Tibial artery (tissue), 4 donors: ENCODE measurements at regions of chr4 and their contacts with region 1.

Region 1: DNA sequence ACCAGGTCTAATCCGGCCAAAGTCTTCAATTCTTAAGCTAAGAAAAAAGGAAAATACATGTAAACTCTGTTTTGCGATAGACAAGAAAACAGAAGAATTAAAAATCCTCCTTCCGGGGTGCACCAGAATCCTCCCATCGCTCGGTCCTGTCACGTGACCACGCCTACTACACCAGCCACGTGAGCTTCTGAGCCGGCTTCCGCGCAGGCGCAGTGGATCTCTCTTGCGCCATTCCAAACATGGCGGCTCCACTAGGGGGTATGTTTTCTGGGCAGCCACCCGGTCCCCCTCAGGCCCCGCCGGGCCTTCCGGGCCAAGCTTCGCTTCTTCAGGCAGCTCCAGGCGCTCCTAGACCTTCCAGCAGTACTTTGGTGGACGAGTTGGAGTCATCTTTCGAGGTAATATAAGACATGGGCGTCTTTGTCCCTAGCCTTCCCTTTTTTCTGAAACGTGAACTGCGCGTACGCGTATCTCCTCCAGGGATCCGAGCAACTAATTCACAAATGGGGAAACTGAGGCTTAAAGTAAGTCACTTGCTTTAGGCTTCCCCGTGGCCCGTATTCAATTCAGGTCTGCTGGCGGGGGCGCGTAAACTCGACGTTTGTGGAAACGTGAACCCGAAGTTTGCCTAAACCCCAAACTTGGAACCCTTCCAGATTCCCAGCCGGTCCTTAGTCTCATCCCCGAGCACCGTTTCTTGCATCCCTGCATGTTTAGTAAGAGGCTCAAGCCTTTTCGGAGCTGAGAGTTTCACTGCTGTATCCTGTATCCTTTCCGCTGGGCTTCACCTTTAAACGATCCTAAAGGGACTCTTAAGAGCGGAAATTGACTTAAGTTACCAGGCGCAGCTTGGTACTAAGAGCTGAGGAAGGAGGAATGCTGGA is at the start of gene MED28:
- DNase-seq: peak; percentile 97 to 98
- H3K4me3 ChIP-seq: peak within 1 kb of the TSS; percentile 79 to 87
- H3K27ac ChIP-seq: peak within 1 kb of the TSS; percentile 82 to 88
- H3K4me1 ChIP-seq: peaks cover 0 to 49% (median 34%) of the 10 kb centered on the region in 4 donors
- H3K27me3 ChIP-seq: no peaks in the 10 kb centered on the region
- CTCF ChIP-seq: peak in 1 of 2 experiments; percentile 36

Region 2: DNA sequence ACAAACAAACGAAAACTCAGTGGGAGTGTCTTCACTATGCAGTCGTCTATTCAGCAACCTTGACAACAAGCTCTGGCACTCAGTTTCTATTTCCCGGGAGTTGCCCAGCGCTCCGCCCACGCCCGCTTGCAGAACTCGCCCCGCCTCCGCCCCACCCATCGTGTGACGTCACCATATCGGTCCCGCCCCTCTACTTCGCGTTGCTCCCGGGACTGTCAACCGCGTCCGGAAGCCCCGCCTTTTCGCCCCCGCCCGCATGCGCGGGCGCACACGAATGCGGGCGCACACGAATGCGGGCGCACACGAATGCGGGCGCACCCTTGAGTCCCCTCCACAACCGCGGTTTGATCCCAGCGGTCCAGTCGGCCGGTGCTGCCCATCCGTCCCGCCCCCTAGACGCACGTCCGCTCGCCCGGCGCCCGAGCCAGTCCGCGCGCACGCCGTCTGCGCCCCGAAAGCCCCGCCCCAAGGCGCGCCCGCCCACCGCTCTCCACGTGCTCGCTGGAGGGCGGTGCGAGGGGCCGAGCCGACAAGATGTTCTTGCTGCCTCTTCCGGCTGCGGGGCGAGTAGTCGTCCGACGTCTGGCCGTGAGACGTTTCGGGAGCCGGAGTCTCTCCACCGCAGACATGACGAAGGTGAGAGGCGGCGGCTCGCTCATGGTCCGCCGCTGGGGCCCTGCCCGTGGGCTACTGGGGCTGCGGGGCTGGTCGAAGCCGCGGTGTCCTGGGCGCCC is 37.6 kb before region 1 on chr4 and contains the start of gene LAP3:
- intact Hi-C with region 1: loop called (anchors 5 kb)
- DNase-seq: peak; percentile 96 to 98
- H3K4me3 ChIP-seq: peak within 1 kb of the TSS; percentile 74 to 85
- H3K27ac ChIP-seq: peak within 1 kb of the TSS; percentile 89 to 90
- H3K4me1 ChIP-seq: peaks cover 0 to 24% (median 13%) of the 10 kb centered on the region in 4 donors
- H3K27me3 ChIP-seq: no peaks in the 10 kb centered on the region
- CTCF ChIP-seq: no peak